WTC11 (cell line): ENCODE measurements at regions of chr16 and their contacts with region 1.

Region 1: GRCh38 chr16:83887081-83887480 is 11.8 kb upstream of the MLYCD start:
- DNase-seq: no peak
- ATAC-seq: no peak
- H3K4me3 Mint-ChIP-seq: no peak overlapping the region
- H3K27ac Mint-ChIP-seq: no peak overlapping the region
- H3K4me1 Mint-ChIP-seq: peaks cover 8% of the 10 kb centered on the region
- H3K27me3 Mint-ChIP-seq: peaks cover under 1% of the 10 kb centered on the region
- CTCF ChIP-seq: no peak

Region 2: GRCh38 chr16:83826146-83826913 is 60.8 kb before region 1 on chr16:
- CTCF ChIA-PET with region 1: interaction called, 29 read pairs
- POLR2A ChIA-PET with region 1: no interaction called
- DNase-seq: peak; percentile 91
- ATAC-seq: peak; percentile 82
- H3K4me3 Mint-ChIP-seq: no peak overlapping the region
- H3K27ac Mint-ChIP-seq: peak overlapping the region; percentile 72; the same call in 1 of the 2 replicates
- H3K4me1 Mint-ChIP-seq: peaks cover 55% of the 10 kb centered on the region
- H3K27me3 Mint-ChIP-seq: no peaks in the 10 kb centered on the region; the same call in 1 of the 2 replicates
- CTCF ChIP-seq: peak; percentile 90

Region 3: DNA sequence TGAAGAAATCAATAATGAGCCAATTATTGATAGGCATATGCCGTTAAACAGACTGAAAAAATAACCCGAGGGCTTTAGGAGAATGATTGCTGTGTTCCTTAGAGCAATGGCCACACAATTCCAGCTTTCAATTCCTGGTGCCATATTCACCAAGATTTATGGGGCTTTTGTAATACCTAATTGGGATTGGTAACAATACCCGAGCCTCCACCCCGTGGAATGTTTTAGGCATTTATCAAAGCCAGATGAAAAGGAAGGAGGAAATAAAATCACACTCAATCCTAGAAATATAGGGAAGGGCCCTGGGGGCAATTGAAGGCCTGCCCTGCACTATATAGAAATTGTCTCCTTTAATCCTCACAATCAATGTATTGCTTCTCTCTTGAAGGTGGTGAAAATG is 30.3 kb before region 1 on chr16:
- CTCF ChIA-PET with region 1: no interaction called
- POLR2A ChIA-PET with region 1: no interaction called
- DNase-seq: no peak
- ATAC-seq: no peak
- H3K4me3 Mint-ChIP-seq: no peak overlapping the region
- H3K27ac Mint-ChIP-seq: no peak overlapping the region
- H3K4me1 Mint-ChIP-seq: peaks cover 29% of the 10 kb centered on the region
- H3K27me3 Mint-ChIP-seq: no peaks in the 10 kb centered on the region; the same call in 1 of the 2 replicates
- CTCF ChIP-seq: no peak